AG04449 (cell line): ENCODE measurements at regions of chr6 and their contacts with region 1.

Region 1: DNA sequence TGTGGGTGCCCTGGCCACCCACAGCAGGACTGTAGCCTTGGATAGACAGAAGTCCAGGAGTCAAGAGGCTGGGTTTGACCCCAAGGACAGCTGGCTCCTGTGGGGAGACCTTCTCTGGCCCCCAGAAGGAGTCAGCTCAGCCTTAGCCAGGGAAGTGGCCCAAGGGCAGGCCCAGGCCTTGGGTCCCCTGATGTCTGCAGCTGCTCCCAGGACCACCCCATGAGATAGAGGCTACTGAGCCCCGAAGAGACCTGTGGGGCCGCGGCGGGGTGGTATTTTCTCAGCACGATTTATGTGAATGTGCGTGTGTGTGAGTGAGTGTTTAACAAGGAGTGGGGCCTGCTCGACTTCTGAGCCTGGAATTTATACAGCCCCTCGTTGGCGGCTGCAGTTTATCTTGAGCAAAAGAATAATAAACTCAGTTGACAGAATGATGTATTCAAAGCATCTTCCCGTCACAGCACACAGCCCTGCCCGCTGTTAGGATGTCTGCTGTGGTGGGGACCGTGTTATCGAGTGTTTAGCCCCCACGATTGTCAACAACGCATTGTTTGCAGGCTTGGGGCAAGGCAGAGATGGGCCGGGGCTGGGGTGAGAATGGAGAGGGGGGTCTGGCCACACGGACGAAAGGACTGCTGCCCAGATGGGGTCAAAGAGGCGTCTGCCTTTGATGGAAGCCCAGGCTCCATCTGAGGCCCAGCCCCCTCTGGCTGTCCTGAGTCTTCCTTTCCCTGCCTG is 163.3 kb downstream of the VEGFA start:
- DNase-seq: no peak
- H3K4me3 ChIP-seq: no peak overlapping the region
- CTCF ChIP-seq: no peak

Region 2: DNA sequence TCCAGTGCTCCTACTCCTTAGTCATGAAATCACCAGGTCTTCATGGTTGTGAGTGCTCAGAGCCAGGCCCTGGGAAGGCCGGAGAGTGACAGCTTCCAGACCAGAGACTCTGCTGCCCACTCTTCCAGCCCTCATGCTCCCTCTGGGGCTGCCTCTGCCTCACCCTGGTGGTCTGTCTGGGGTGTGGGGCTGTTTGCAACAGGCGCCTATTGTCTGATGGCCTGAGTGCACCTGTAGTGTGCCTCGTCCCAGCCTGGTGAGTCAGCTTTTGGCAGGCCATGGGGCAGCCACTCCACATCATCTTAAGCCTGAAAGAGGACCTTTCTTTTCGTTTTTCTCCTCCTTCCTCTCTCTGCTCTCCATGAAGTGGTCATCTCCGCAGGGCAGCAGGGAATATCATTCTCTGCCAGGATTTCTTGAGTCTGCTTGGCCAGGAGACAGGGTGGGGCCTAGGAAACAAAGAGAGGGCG is 10.5 kb after region 1 on chr6:
- CTCF ChIA-PET with region 1: interaction called, 14 read pairs
- POLR2A ChIA-PET with region 1: interaction called, 4 read pairs
- DNase-seq: no peak
- H3K4me3 ChIP-seq: no peak overlapping the region
- CTCF ChIP-seq: no peak